ENCODE measurements at regions of chr3 and their contacts with region 1.

Region 1: DNA sequence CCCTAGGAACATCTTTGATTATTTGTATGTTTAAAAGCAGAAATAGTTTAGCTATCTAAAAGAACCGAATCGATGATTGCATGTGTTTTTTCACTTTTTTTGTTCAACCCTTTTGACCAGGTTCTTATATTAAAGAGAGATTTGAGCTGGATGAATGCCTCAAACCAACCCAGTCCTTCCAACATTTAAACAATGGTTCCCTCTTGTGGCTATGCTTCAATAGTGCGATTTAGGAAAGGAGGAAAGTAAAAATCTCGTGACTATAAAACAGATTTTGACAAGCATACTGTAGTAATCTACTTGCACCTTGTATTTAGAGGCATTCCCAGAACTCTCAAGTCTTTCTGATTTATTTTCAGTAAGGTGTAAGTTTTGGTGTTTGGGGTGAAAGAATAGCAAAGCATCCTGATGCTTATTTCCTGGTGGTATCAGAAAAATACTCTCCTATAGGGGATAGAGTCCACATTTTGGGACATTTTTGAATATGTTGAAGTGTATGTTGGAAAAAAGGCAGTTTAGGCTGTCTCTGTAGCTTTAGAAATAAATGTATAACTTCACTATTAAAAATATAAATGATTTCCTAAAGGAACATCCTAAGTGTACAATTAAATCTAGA is 159.6 kb upstream of the KCNH8 start:
- DNase-seq: peak in 3 of 14 experiments; percentile 35 to 63 (median 60)
- ATAC-seq: peak; percentile 67
- H3K4me3 ChIP-seq: no peak overlapping the region
- H3K4me3 Mint-ChIP-seq: peak overlapping the region; percentile 76
- H3K27ac ChIP-seq: no peak overlapping the region
- H3K27ac Mint-ChIP-seq: peak overlapping the region; percentile 77
- H3K4me1 ChIP-seq: no peaks in the 10 kb centered on the region
- H3K4me1 Mint-ChIP-seq: peaks cover 27% of the 10 kb centered on the region
- H3K27me3 ChIP-seq: peaks cover 3 to 21% of the 10 kb centered on the region in 2 experiments
- H3K27me3 Mint-ChIP-seq: peaks cover 23% of the 10 kb centered on the region
- CTCF ChIP-seq: peak; percentile 84

Region 2: DNA sequence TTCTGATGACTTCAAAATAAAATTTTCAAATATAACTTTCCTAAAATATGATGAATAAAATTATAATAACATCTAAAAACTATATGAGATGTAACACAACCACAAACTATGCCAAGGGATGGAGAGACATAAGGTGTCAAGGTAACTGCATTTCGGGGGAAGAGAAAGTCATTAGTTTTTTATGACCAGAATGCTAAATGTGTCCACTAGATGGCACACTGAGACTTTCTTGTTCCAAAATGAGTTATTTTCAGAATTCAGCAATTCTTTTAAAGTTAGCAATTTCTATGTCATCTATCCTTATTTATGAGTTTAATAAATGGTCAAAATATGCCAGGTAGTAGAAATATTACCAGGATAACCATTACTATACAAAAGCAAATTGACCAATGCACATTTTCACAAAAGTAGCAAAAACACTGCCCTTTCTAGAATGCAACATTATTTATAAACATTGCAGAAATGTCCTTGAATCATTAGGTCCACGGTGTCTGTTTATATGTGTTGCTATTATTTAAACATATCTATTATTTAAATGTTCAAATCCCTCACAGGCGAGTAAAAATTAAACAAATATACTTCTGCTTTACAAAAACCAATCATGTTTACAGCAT is 1729.8 kb before region 1 on chr3:
- CTCF ChIA-PET with region 1: no interaction called
- POLR2A ChIA-PET with region 1: no interaction called
- intact Hi-C with region 1: loop called (anchors 1 to 10 kb)
- DNase-seq: peak in 4 of 14 experiments; percentile 34 to 69 (median 60)
- ATAC-seq: peak; percentile 39
- H3K4me3 ChIP-seq: no peak overlapping the region
- H3K4me3 Mint-ChIP-seq: no peak overlapping the region
- H3K27ac ChIP-seq: no peak overlapping the region
- H3K27ac Mint-ChIP-seq: no peak overlapping the region
- H3K4me1 ChIP-seq: no peaks in the 10 kb centered on the region
- H3K4me1 Mint-ChIP-seq: no peaks in the 10 kb centered on the region
- H3K27me3 ChIP-seq: no peaks in the 10 kb centered on the region
- H3K27me3 Mint-ChIP-seq: no peaks in the 10 kb centered on the region
- CTCF ChIP-seq: peak; percentile 92

Region 3: DNA sequence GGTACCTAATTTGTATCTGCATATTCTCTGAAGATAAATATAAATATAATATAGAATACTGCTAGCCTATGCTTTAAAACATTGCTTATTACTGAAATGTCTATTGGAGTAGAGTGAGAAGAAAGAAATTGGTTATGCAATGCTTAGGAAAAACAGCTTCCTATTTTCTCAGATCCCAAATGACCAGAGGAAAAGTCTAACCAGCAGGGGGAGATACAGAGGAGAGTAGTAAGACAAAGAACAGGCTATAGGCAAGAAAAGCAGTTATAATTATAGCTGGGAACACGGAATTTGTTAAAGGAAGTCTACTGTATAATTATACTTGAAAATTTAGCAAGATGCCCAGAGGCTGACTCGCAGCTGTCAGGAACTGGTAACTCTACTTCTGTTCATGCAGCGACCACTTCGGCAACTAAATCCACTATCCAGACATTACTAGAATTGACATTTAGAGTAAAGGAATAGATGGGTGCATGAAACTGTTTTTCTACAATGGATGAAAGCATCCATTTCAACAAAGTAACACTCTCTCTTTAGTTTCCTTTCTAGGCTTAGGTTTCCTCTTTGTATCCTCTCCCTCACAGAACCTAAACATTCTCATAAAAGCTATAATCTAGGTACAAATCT is 1343.5 kb before region 1 on chr3:
- CTCF ChIA-PET with region 1: interaction called, 4 read pairs
- POLR2A ChIA-PET with region 1: interaction called, 3 read pairs
- intact Hi-C with region 1: loop called (anchors 5 to 10 kb)
- DNase-seq: peak in 3 of 14 experiments; percentile 38 to 52 (median 49)
- ATAC-seq: no peak
- H3K4me3 ChIP-seq: no peak overlapping the region
- H3K4me3 Mint-ChIP-seq: no peak overlapping the region
- H3K27ac ChIP-seq: no peak overlapping the region
- H3K27ac Mint-ChIP-seq: no peak overlapping the region
- H3K4me1 ChIP-seq: no peaks in the 10 kb centered on the region
- H3K4me1 Mint-ChIP-seq: peaks cover 6% of the 10 kb centered on the region
- H3K27me3 ChIP-seq: no peaks in the 10 kb centered on the region
- H3K27me3 Mint-ChIP-seq: no peaks in the 10 kb centered on the region
- CTCF ChIP-seq: peak; percentile 60

Region 4: DNA sequence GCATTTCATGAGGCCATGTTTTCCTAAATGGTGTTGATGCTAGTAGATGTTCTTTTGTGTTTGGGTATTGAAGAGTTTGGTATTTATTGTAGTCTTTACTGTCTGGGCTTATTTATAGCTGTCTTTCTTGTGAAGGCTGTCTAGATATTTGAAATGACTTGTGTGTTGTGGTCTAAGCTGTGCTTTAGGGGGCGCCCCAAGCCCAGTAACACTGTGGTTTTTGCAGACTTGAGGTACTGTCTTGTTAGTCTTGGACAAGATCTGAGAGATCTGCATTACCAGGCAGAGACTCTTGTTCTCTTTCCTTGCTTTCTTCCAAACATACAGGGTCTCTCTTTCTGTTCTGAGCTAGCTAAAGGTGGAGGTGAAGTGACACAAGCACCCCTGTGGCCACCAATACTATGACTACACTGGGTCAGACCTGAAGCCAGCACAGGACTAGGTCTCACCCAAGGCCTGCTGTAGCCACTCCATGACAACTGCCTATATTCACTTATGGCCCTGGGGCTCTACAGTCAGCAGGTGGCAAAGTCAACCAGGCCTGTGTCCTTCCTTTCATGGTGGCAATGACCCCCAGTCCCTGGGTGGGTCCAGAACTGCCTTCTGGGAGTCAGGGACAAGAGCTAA is 1094.2 kb before region 1 on chr3:
- CTCF ChIA-PET with region 1: no interaction called
- POLR2A ChIA-PET with region 1: no interaction called
- intact Hi-C with region 1: loop called in 1 of 2 experiments (anchors 5 kb)
- DNase-seq: peak in 10 of 14 experiments; percentile 6 to 42 (median 26)
- ATAC-seq: peak; percentile 39
- H3K4me3 ChIP-seq: no peak overlapping the region
- H3K4me3 Mint-ChIP-seq: no peak overlapping the region
- H3K27ac ChIP-seq: no peak overlapping the region
- H3K27ac Mint-ChIP-seq: no peak overlapping the region
- H3K4me1 ChIP-seq: no peaks in the 10 kb centered on the region
- H3K4me1 Mint-ChIP-seq: no peaks in the 10 kb centered on the region
- H3K27me3 ChIP-seq: no peaks in the 10 kb centered on the region
- H3K27me3 Mint-ChIP-seq: no peaks in the 10 kb centered on the region
- CTCF ChIP-seq: no peak

Region 5: GRCh38 chr3:18389108-18389733 is 599.5 kb before region 1 on chr3:
- CTCF ChIA-PET with region 1: no interaction called
- POLR2A ChIA-PET with region 1: no interaction called
- intact Hi-C with region 1: loop called in 1 of 2 experiments (anchors 10 kb)
- DNase-seq: peak in 6 of 14 experiments; percentile 8 to 73 (median 50)
- ATAC-seq: peak; percentile 62
- H3K4me3 ChIP-seq: no peak overlapping the region
- H3K4me3 Mint-ChIP-seq: no peak overlapping the region
- H3K27ac ChIP-seq: no peak overlapping the region
- H3K27ac Mint-ChIP-seq: peak overlapping the region; percentile 68
- H3K4me1 ChIP-seq: peaks cover 4% of the 10 kb centered on the region
- H3K4me1 Mint-ChIP-seq: peaks cover 93% of the 10 kb centered on the region
- H3K27me3 ChIP-seq: no peaks in the 10 kb centered on the region
- H3K27me3 Mint-ChIP-seq: no peaks in the 10 kb centered on the region
- CTCF ChIP-seq: peak; percentile 93

Region 6: DNA sequence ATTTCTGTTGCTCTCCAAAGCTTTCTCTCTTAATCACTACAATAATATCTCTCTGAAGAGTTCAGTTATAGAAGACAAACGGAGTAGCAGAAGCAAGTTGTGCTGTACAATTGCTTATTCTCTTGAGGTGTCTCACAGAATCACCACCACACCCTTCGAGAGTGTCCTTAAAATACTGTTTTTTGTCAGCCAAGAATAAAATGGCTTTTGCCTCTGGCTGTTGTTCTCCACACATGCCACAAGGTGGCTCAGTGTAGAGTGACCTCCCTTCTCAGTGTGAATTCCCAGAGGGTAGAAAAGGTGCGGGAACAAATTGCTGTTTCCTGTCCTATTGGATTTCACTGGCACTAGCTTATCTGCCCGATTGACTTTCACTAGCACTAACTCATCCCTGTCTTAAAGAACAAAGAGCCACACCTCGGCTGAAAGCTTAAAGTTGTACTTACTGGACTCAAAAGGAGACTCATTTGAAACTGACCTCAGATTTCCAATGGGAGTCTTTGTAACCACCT is 429.3 kb before region 1 on chr3:
- CTCF ChIA-PET with region 1: no interaction called
- POLR2A ChIA-PET with region 1: no interaction called
- intact Hi-C with region 1: loop called in 1 of 2 experiments (anchors 10 kb)
- DNase-seq: peak in 10 of 14 experiments; percentile 6 to 72 (median 28)
- ATAC-seq: peak; percentile 60
- H3K4me3 ChIP-seq: no peak overlapping the region
- H3K4me3 Mint-ChIP-seq: peak overlapping the region; percentile 48
- H3K27ac ChIP-seq: no peak overlapping the region
- H3K27ac Mint-ChIP-seq: peak overlapping the region; percentile 45
- H3K4me1 ChIP-seq: peaks cover 13% of the 10 kb centered on the region
- H3K4me1 Mint-ChIP-seq: peaks cover 57% of the 10 kb centered on the region
- H3K27me3 ChIP-seq: no peaks in the 10 kb centered on the region
- H3K27me3 Mint-ChIP-seq: no peaks in the 10 kb centered on the region
- CTCF ChIP-seq: peak; percentile 81

Measured in CD4-positive, alpha-beta T cell (primary cell).